GM12878 (cell line): ENCODE measurements at regions of chr12 and their contacts with region 1.

Region 1: DNA sequence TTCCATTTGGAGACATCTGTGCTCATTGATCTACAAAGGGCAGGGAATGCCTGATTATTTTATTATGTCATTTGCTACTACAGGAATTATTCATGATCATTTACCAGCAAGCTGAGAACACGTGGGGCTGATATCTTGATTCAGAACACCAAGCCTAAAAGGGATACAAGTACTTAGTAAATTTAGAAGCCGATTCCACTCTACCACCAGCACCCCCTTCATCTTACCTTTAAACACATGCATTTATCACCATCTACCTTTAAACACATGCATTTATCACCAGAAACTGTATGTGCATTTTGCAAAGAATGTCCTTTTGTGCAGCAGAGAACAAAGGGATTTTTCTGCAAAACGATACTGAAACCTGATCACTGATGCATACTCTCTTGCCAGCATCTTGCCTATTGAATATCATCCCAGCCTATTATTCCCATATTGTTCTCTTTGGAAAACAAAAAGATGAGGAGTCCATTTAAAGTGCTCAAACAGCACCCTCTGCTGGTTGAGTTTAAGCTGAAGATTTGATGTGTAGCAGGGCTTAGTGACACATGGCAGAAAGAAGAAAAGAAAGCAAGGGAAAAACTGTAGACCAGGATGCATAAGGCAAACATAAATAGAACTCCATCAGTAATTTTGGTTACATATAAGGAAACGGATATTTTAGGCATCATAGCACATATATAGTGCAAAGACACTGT is 132.6 kb upstream of the PLEKHG7 start:
- DNase-seq: peak; percentile 93
- ATAC-seq: peak; percentile 94
- H3K4me3 ChIP-seq: no peak overlapping the region
- H3K27ac ChIP-seq: peak overlapping the region; percentile 55
- H3K4me1 ChIP-seq: peaks cover 11% of the 10 kb centered on the region; the same call in 1 of the 2 replicates
- H3K27me3 ChIP-seq: no peaks in the 10 kb centered on the region
- CTCF ChIP-seq: peak; percentile 47 to 76 (median 48); a peak in 5 of 6 replicates
- EP300 ChIP-seq: no peak
- POLR2A ChIP-seq: no peak
- RAD21 ChIP-seq: peak; percentile 81

Region 2: DNA sequence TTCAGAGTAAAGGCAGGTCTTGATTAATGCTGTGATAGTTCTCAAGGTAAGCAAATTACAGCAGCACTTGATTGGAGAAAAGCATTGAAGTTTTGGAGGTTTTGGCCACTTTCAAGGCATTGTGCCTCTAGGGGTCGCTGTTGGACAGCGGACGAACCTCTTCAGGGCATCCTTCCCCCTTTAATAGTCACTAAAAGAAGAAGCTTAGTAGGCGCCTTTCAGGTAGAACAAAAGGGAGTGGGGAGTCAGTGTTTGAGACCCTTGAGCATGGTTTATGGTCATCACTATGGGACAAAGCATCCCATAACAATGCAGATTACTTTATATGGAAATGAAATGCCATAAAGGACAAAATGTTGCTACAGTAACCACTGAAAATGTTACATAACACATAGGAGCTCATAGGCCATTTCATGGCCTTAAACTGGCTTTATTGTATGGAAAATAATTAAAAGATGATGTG is 1188.1 kb before region 1 on chr12:
- CTCF ChIA-PET with region 1: interaction called, 44 read pairs
- POLR2A ChIA-PET with region 1: no interaction called
- RAD21 ChIA-PET with region 1: interaction called, 41 read pairs
- SMC1A ChIA-PET with region 1: interaction called, 29 read pairs
- in situ Hi-C with region 1: loop called (anchors 5 kb)
- intact Hi-C with region 1: loop called (anchors 1 kb)
- DNase-seq: peak; percentile 54
- ATAC-seq: peak; percentile 95
- H3K4me3 ChIP-seq: peak overlapping the region; percentile 68
- H3K27ac ChIP-seq: peak overlapping the region; percentile 37; the same call in 1 of the 2 replicates
- H3K4me1 ChIP-seq: peaks cover 3% of the 10 kb centered on the region; the same call in 1 of the 2 replicates
- H3K27me3 ChIP-seq: no peaks in the 10 kb centered on the region
- CTCF ChIP-seq: peak; percentile 80 to 89 (median 87)
- EP300 ChIP-seq: no peak
- POLR2A ChIP-seq: no peak
- RAD21 ChIP-seq: peak; percentile 92

Region 3: DNA sequence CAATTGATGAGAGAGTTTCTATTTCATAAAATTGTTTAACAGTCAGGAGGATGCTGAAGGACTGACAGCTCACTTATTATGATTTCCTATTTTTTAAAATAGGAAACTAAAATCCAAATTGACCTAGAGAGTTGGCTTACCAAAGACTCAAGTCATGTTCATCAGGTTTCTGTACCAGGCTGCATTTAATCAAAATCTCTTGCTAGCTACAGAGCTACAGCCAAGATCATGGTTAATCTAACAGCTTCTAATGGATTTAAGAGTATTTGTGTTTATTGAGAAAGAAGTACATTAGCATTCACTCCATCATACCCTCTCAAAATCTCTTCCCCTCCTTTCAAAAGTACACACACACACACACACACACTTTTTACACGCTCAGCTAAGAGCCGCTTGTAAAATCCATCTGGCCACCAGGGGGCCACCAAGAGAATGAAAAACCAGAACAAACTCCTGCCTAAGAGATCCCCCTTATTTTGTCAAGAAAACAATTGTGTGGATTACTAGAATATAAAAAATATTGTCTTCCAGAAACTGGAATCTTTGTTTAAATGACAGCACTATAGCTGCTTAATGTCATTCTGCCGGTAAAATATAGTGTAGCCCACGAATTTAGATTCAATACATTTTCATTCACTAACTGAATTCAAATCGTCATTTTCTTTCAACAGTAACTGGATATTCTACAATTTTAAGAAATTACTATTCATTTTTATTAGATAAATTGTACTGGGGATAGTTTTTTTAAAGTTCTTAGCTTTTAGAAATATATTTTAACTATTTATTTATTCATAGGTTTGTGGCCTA is 758.5 kb before region 1 on chr12:
- CTCF ChIA-PET with region 1: interaction called, 61 read pairs
- POLR2A ChIA-PET with region 1: no interaction called
- RAD21 ChIA-PET with region 1: interaction called, 41 read pairs
- SMC1A ChIA-PET with region 1: interaction called, 51 read pairs
- in situ Hi-C with region 1: loop called (anchors 5 kb)
- intact Hi-C with region 1: loop called (anchors 1 kb)
- DNase-seq: peak; percentile 40
- ATAC-seq: peak; percentile 95
- H3K4me3 ChIP-seq: no peak overlapping the region
- H3K27ac ChIP-seq: no peak overlapping the region
- H3K4me1 ChIP-seq: no peaks in the 10 kb centered on the region
- H3K27me3 ChIP-seq: no peaks in the 10 kb centered on the region
- CTCF ChIP-seq: peak; percentile 68 to 86 (median 79)
- EP300 ChIP-seq: no peak
- POLR2A ChIP-seq: no peak
- RAD21 ChIP-seq: peak; percentile 87

Region 4: GRCh38 chr12:92278378-92278828 is 291.8 kb before region 1 on chr12:
- CTCF ChIA-PET with region 1: no interaction called
- POLR2A ChIA-PET with region 1: no interaction called
- RAD21 ChIA-PET with region 1: no interaction called
- SMC1A ChIA-PET with region 1: interaction called, 5 read pairs
- in situ Hi-C with region 1: no loop called
- intact Hi-C with region 1: loop called (anchors 5 kb)
- DNase-seq: no peak
- ATAC-seq: no peak
- H3K4me3 ChIP-seq: no peak overlapping the region
- H3K27ac ChIP-seq: no peak overlapping the region
- H3K4me1 ChIP-seq: no peaks in the 10 kb centered on the region
- H3K27me3 ChIP-seq: no peaks in the 10 kb centered on the region
- CTCF ChIP-seq: no peak
- EP300 ChIP-seq: no peak
- POLR2A ChIP-seq: no peak
- RAD21 ChIP-seq: no peak

Region 5: GRCh38 chr12:92445253-92446082 is 124.7 kb before region 1 on chr12:
- CTCF ChIA-PET with region 1: interaction called, 6 read pairs
- POLR2A ChIA-PET with region 1: interaction called, 3 read pairs
- RAD21 ChIA-PET with region 1: interaction called, 10 read pairs
- SMC1A ChIA-PET with region 1: interaction called, 28 read pairs
- in situ Hi-C with region 1: loop called (anchors 25 kb)
- intact Hi-C with region 1: no loop called
- DNase-seq: peak; percentile 97
- ATAC-seq: peak; percentile 90
- H3K4me3 ChIP-seq: peak overlapping the region; percentile 41
- H3K27ac ChIP-seq: peak overlapping the region; percentile 100
- H3K4me1 ChIP-seq: peaks cover 44% of the 10 kb centered on the region
- H3K27me3 ChIP-seq: no peaks in the 10 kb centered on the region
- CTCF ChIP-seq: no peak
- EP300 ChIP-seq: peak; percentile 89 to 91
- POLR2A ChIP-seq: peak; percentile 61
- RAD21 ChIP-seq: peak; percentile 32; the same call in 1 of the 2 replicates

Region 6: GRCh38 chr12:92493816-92494215 is 76.4 kb before region 1 on chr12:
- CTCF ChIA-PET with region 1: interaction called, 18 read pairs
- POLR2A ChIA-PET with region 1: interaction called, 3 read pairs
- RAD21 ChIA-PET with region 1: interaction called, 356 read pairs
- SMC1A ChIA-PET with region 1: interaction called, 805 read pairs
- in situ Hi-C with region 1: no loop called
- intact Hi-C with region 1: no loop called
- DNase-seq: no peak
- ATAC-seq: peak; percentile 57
- H3K4me3 ChIP-seq: no peak overlapping the region
- H3K27ac ChIP-seq: peak overlapping the region; percentile 81
- H3K4me1 ChIP-seq: peaks cover 74% of the 10 kb centered on the region
- H3K27me3 ChIP-seq: no peaks in the 10 kb centered on the region
- CTCF ChIP-seq: no peak
- EP300 ChIP-seq: peak in 1 of 2 experiments; percentile 36; a peak in 1 of 4 replicates
- POLR2A ChIP-seq: no peak
- RAD21 ChIP-seq: no peak

Region 7: GRCh38 chr12:92551853-92552397 is 18.3 kb before region 1 on chr12:
- CTCF ChIA-PET with region 1: interaction called, 12 read pairs
- POLR2A ChIA-PET with region 1: interaction called, 204 read pairs
- RAD21 ChIA-PET with region 1: interaction called, 269 read pairs
- SMC1A ChIA-PET with region 1: interaction called, 319 read pairs
- in situ Hi-C with region 1: no loop called
- intact Hi-C with region 1: no loop called
- DNase-seq: peak; percentile 98
- ATAC-seq: peak; percentile 75
- H3K4me3 ChIP-seq: peak overlapping the region; percentile 17; the same call in 1 of the 2 replicates
- H3K27ac ChIP-seq: peak overlapping the region; percentile 98
- H3K4me1 ChIP-seq: peaks cover 67% of the 10 kb centered on the region
- H3K27me3 ChIP-seq: no peaks in the 10 kb centered on the region
- CTCF ChIP-seq: no peak
- EP300 ChIP-seq: peak; percentile 92 to 97
- POLR2A ChIP-seq: peak; percentile 57
- RAD21 ChIP-seq: no peak

Region 8: GRCh38 chr12:92745856-92746540 is 175.8 kb after region 1 on chr12:
- CTCF ChIA-PET with region 1: no interaction called
- POLR2A ChIA-PET with region 1: no interaction called
- RAD21 ChIA-PET with region 1: no interaction called
- SMC1A ChIA-PET with region 1: no interaction called
- in situ Hi-C with region 1: no loop called
- intact Hi-C with region 1: no loop called
- DNase-seq: no peak
- ATAC-seq: no peak
- H3K4me3 ChIP-seq: no peak overlapping the region
- H3K27ac ChIP-seq: no peak overlapping the region
- H3K4me1 ChIP-seq: no peaks in the 10 kb centered on the region
- H3K27me3 ChIP-seq: no peaks in the 10 kb centered on the region
- CTCF ChIP-seq: no peak
- EP300 ChIP-seq: no peak
- POLR2A ChIP-seq: no peak
- RAD21 ChIP-seq: no peak